ENCODE measurements at regions of chr10 and their contacts with region 1.

Region 1: DNA sequence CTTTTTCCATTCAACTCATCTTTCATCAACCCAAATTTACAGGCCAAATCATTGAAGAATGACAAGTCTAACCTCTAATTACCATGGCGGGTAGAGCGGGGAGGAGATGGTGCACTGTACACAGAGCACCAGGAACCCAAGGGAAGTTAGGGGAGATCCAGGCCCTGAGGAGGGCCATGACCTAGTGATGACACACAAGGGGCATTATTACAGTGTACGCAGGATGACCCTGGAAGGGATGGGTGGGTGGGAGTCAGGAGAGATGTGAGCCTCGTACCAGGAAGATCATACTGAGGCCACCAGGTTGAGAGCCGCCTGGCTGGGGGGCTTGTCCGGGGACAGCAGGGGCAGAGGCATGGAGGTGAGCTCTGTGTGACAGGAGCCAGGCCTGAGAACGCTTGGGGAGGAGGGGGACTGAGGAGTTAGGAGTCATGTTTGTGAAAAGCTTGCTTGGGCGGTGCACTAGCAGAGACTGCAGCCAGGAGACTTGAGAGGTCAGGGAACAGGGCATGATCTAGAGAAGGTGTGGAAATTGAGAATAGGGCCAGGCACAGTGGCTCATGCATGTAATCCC is 89.5 kb upstream of the CCNY start:
- DNase-seq: no peak
- H3K4me3 Mint-ChIP-seq: no peak overlapping the region
- H3K27ac Mint-ChIP-seq: no peak overlapping the region
- H3K4me1 Mint-ChIP-seq: no peaks in the 10 kb centered on the region
- H3K27me3 Mint-ChIP-seq: peaks cover 6% of the 10 kb centered on the region

Region 2: DNA sequence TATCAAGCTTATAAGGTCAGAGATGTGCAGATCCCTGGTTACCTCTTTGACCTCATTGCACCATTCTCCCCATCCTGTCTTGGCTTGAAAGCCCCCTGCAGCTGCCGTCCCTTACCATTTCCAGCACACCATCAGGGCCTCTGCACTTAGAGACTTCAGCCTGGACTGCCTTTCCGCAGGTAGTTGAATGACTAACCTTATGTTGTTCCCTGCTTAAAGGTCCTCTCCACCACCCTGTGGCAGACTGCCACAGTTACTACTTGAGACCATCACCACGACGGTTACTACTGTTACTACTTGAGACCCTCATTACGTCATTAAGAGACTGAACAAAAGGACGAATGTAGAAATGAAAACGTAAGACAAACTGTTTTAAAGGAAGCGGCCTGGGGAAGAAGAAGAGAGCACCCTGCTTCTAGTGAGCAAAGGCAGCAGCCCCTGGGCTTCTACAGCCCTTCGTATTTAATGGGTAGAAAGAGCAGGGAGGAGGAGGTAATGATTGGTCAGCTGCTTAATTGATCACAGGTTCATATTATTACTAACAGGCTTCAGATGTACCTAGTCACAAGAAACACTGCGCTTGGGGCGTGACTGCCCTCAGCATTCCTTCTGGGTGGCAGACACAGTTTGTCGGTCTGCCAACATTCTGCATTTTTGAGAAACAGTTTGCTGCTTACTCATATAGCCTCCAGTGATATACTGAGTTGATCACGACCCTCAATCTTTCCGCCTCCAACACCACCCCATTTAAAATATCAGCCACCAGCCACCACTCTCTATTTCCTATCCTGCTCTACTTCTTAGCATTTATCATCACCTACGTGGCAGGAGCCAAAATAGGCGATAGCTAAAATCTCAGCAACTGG is 357.6 kb before region 1 on chr10:
- intact Hi-C with region 1: no loop called
- DNase-seq: no peak
- H3K4me3 Mint-ChIP-seq: no peak overlapping the region
- H3K27ac Mint-ChIP-seq: no peak overlapping the region
- H3K4me1 Mint-ChIP-seq: no peaks in the 10 kb centered on the region
- H3K27me3 Mint-ChIP-seq: peaks cover 9% of the 10 kb centered on the region

Region 3: GRCh38 chr10:35090162-35090954 is 156.5 kb before region 1 on chr10 and contains the start of gene CUL2:
- intact Hi-C with region 1: no loop called
- DNase-seq: peak; percentile 90
- H3K4me3 Mint-ChIP-seq: peak within 1 kb of the TSS; percentile 98
- H3K27ac Mint-ChIP-seq: peak within 1 kb of the TSS; percentile 99
- H3K4me1 Mint-ChIP-seq: peaks cover 38% of the 10 kb centered on the region
- H3K27me3 Mint-ChIP-seq: peaks cover 9% of the 10 kb centered on the region
- total RNA-seq, gene CUL2: 49.8 and 50.5 TPM in 2 replicates

Region 4: DNA sequence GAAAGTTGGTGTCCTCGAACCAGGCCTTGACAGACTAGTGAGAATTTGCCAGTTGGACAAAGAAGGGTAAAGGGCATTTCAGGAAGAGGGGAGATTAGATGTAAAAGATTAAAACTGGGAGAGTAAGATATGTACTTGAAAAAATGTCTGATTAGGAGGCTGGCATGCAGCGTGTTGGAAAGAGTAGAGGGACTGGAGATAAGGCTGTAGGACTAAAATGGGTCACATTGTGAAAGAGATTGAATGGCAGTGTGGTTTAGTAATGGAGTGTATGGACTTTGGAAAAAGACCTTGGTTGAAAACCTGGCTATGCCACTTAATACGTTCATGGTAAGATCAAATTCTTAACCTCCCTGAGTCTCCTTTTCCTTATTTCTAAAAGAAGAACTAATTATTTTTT is 106.1 kb before region 1 on chr10:
- intact Hi-C with region 1: no loop called
- DNase-seq: no peak
- H3K4me3 Mint-ChIP-seq: no peak overlapping the region
- H3K27ac Mint-ChIP-seq: no peak overlapping the region
- H3K4me1 Mint-ChIP-seq: peaks cover 35% of the 10 kb centered on the region
- H3K27me3 Mint-ChIP-seq: no peaks in the 10 kb centered on the region

Region 5: DNA sequence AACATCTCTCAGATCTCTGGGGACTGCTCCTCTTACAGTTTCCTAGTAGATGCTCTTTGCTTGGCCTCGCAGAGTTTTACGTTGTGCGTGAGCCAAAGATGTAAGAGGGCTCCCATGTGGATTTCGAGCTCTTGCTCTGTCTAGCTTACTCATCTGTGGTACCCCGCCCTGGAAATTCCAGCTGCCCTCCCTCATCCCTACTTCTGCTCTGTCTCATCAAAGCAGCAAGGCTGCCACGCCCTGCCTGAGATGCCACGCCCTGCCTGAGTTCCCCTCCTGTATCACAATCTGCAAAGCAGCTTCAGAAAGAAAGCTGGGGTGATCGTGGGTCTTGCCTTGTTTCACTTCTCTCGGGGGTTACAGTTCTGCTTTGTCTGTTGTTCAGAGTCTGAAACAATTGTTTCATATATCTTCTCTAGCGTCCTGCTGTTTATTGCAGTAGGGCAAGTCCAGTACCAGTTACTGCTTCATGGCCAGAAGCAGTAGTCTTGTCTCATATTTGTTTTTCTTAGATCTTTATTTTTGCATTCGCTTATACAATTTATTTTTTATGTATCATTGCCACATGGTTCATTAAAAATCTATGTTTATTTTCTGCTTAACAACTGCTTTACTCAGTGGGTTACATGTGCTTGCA is 53.3 kb after region 1 on chr10:
- intact Hi-C with region 1: loop called (anchors 10 kb)
- DNase-seq: no peak
- H3K4me3 Mint-ChIP-seq: no peak overlapping the region
- H3K27ac Mint-ChIP-seq: no peak overlapping the region
- H3K4me1 Mint-ChIP-seq: peaks cover 9% of the 10 kb centered on the region
- H3K27me3 Mint-ChIP-seq: peaks cover 2% of the 10 kb centered on the region

Region 6: GRCh38 chr10:35501921-35502320 is 255.1 kb after region 1 on chr10:
- intact Hi-C with region 1: loop called (anchors 10 kb)
- DNase-seq: no peak
- H3K4me3 Mint-ChIP-seq: no peak overlapping the region
- H3K27ac Mint-ChIP-seq: no peak overlapping the region
- H3K4me1 Mint-ChIP-seq: peaks cover 11% of the 10 kb centered on the region
- H3K27me3 Mint-ChIP-seq: no peaks in the 10 kb centered on the region

Region 7: GRCh38 chr10:35668865-35669650 is 422.2 kb after region 1 on chr10:
- intact Hi-C with region 1: no loop called
- DNase-seq: no peak
- H3K4me3 Mint-ChIP-seq: no peak overlapping the region
- H3K27ac Mint-ChIP-seq: no peak overlapping the region
- H3K4me1 Mint-ChIP-seq: no peaks in the 10 kb centered on the region
- H3K27me3 Mint-ChIP-seq: peaks cover 1% of the 10 kb centered on the region